Dendritic cell treated with granulocyte-macrophage colony-stimulating factor and Interleukin-4, amounts not matched to agents 40 ng/mL and 50 ng/mL, for 4 days (primary cell): ENCODE measurements at regions of chr17 and their contacts with region 1.

Region 1: GRCh38 chr17:15944759-15945529 is at the start of gene ADORA2B:
- H3K4me3 Mint-ChIP-seq: peak within 1 kb of the TSS; percentile 78
- H3K27ac Mint-ChIP-seq: peak within 1 kb of the TSS; percentile 83
- H3K4me1 Mint-ChIP-seq: peaks cover 62% of the 10 kb centered on the region
- H3K27me3 Mint-ChIP-seq: peaks cover 9% of the 10 kb centered on the region

Region 2: GRCh38 chr17:15886804-15887203 is 58.1 kb before region 1 on chr17:
- intact Hi-C with region 1: loop called (anchors 5 kb)
- H3K4me3 Mint-ChIP-seq: no peak overlapping the region
- H3K27ac Mint-ChIP-seq: peak overlapping the region; percentile 70
- H3K4me1 Mint-ChIP-seq: peaks cover 46% of the 10 kb centered on the region
- H3K27me3 Mint-ChIP-seq: peaks cover 4% of the 10 kb centered on the region

Region 3: GRCh38 chr17:15928348-15928740 is 16.6 kb before region 1 on chr17:
- intact Hi-C with region 1: loop called (anchors 1 kb)
- H3K4me3 Mint-ChIP-seq: peak overlapping the region; percentile 73
- H3K27ac Mint-ChIP-seq: peak overlapping the region; percentile 78
- H3K4me1 Mint-ChIP-seq: peaks cover 45% of the 10 kb centered on the region
- H3K27me3 Mint-ChIP-seq: peaks cover 16% of the 10 kb centered on the region

Region 4: GRCh38 chr17:15999439-16000350 is 54.8 kb after region 1 on chr17 and contains the starts of genes TTC19 and ZSWIM7:
- intact Hi-C with region 1: loop called (anchors 2 kb)
- H3K4me3 Mint-ChIP-seq: peak within 1 kb of the TSS; percentile 93
- H3K27ac Mint-ChIP-seq: peak within 1 kb of the TSS; percentile 92
- H3K4me1 Mint-ChIP-seq: peaks cover 49% of the 10 kb centered on the region
- H3K27me3 Mint-ChIP-seq: no peaks in the 10 kb centered on the region

Region 5: DNA sequence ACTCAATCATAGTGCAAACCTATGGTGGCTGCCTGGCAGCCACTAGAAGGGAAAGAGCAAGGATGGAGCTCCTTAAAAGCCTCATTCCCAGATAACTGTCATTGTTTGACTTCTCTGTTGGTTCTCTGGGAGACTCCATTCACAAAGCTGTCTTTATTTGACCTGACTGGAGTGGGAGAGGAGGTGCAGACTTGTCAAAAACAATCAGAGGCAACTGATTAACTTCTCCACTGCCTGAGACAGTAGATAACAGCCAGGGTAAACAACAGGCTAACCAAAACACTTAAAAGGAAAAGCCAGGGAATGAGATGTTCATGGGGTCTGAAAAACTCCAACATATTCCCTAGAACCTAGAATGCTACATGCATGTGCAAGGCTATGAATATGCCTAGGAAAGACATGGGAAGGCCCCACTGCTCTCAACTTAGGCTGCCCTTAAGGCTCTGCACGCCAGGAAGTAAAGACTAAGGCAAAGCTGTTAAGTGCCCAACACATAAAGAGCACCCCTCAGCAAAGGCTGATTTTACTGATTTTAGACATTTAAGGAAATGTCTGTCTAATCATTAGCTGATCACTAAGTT is 136.7 kb after region 1 on chr17:
- intact Hi-C with region 1: no loop called
- H3K4me3 Mint-ChIP-seq: no peak overlapping the region
- H3K27ac Mint-ChIP-seq: no peak overlapping the region
- H3K4me1 Mint-ChIP-seq: no peaks in the 10 kb centered on the region
- H3K27me3 Mint-ChIP-seq: no peaks in the 10 kb centered on the region